Ovary (tissue), 10 donors: ENCODE measurements at regions of chr11 and their contacts with region 1.

Region 1: GRCh38 chr11:59534676-59535075 is 23.3 kb downstream of the OR4D9 start:
- DNase-seq: no peak
- H3K4me3 ChIP-seq: no peak overlapping the region
- H3K27ac ChIP-seq: no peak overlapping the region
- H3K4me1 ChIP-seq: peaks cover 3% of the 10 kb centered on the region
- H3K27me3 ChIP-seq: no peaks in the 10 kb centered on the region
- CTCF ChIP-seq: no peak
- EP300 ChIP-seq: no peak
- POLR2A ChIP-seq: no peak

Region 2: DNA sequence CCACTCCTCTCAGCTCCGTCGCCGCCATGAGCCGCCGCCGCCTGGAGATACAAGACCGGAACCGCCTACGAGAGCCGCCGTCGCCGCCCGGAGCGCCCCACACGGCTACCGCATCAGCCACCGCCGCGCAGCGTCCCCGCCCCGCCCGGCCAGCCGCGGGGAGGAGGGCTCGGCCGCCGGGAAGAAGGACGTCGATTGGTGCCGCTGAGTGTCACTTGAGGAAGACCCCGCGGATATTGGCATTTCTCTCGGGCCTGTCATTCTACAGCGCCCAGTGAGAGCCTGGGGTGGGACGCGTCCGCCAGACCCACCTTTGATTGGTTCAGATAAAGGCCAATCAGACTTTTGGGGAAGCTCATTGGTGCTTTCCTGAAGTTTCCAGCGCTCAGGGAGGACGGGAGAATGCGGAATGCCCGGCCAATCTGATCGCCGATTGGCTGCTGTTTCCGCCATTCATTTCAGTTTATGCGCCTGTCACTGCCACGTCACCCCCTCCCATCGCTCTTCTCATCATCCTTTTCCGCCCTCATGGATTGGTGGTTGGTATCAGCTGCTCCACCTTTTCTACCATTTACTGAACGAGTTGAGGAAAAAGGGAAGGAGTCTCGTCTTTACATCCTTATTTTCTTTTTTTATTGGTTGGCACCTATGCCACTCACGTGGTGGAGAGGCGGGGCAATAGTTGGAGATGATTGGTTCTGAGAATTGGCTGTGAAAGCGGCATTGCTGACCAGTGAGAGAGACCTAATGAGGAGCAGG is 81.1 kb after region 1 on chr11 and contains the start of gene OSBP:
- intact Hi-C with region 1: loop called in 1 of 4 experiments (anchors 5 kb)
- DNase-seq: peak; percentile 99 to 100 (median 99)
- H3K4me3 ChIP-seq: peak within 1 kb of the TSS; percentile 84
- H3K27ac ChIP-seq: peak within 1 kb of the TSS; percentile 77 to 92
- H3K4me1 ChIP-seq: peaks cover 3% of the 10 kb centered on the region
- H3K27me3 ChIP-seq: no peaks in the 10 kb centered on the region
- CTCF ChIP-seq: peak in 1 of 3 donors; percentile 45
- EP300 ChIP-seq: no peak
- POLR2A ChIP-seq: peak; percentile 74
- total RNA-seq, gene OSBP: 27.1 to 46.4 (median 42.4) TPM

Region 3: DNA sequence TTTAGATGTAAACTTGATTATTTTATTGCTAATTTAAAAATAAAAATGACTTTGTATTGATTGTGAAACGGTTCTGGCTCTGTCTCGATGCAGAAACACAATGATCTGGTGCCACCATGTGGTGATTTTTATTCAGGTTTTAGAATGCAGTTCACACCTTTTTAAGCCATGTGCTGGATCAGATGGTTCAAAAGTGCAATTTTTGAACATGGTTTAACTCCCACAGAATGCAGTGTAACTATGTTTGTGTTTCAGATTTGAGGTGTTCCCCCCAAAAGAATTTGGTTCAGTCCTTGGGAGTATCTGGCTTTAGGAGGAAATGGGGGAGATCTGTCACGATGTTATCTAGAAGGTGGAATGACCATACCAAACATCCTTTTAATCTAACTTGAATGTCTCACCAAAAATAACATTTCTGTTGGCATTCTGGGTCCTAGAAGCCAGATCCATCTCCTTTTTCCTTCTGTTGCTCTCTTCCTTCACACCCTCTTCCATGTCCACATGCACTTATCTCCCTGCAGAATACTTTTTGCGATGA is 268.0 kb after region 1 on chr11:
- intact Hi-C with region 1: loop called in 1 of 4 experiments (anchors 10 kb)
- DNase-seq: peak in 2 of 5 donors; percentile 16 to 24
- H3K4me3 ChIP-seq: no peak overlapping the region
- H3K27ac ChIP-seq: no peak overlapping the region
- H3K4me1 ChIP-seq: no peaks in the 10 kb centered on the region
- H3K27me3 ChIP-seq: no peaks in the 10 kb centered on the region
- CTCF ChIP-seq: peak; percentile 38 to 60 (median 55)
- EP300 ChIP-seq: no peak
- POLR2A ChIP-seq: no peak